ENCODE measurements at regions of chr12 and their contacts with region 1.

Region 1: DNA sequence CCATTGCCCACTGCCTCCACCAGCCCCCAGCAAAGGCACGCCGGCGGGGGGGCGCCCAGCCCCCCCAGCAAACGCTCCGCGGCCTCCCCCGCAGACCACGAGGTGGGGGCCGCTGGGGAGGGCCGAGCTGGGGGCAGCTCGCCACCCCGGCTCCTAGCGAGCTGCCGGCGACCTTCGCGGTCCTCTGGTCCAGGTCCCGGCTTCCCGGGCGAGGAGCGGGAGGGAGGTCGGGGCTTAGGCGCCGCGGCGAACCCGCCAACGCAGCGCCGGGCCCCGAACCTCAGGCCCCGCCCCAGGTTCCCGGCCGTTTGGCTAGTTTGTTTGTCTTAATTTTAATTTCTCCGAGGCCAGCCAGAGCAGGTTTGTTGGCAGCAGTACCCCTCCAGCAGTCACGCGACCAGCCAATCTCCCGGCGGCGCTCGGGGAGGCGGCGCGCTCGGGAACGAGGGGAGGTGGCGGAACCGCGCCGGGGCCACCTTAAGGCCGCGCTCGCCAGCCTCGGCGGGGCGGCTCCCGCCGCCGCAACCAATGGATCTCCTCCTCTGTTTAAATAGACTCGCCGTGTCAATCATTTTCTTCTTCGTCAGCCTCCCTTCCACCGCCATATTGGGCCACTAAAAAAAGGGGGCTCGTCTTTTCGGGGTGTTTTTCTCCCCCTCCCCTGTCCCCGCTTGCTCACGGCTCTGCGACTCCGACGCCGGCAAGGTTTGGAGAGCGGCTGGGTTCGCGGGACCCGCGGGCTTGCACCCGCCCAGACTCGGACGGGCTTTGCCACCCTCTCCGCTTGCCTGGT is at the start of gene CDKN1B:
- DNase-seq: peak; percentile 68 to 91 (median 87)
- ATAC-seq: peak; percentile 77
- H3K4me3 ChIP-seq: peak within 1 kb of the TSS; percentile 94
- H3K4me3 Mint-ChIP-seq: peak within 1 kb of the TSS; percentile 87 to 100 (median 98)
- H3K27ac ChIP-seq: peak within 1 kb of the TSS; percentile 99
- H3K27ac Mint-ChIP-seq: peak within 1 kb of the TSS; percentile 97 to 99 (median 99)
- H3K4me1 ChIP-seq: peaks cover 24 to 39% of the 10 kb centered on the region in 2 donors
- H3K4me1 Mint-ChIP-seq: peaks cover 43 to 66% (median 55%) of the 10 kb centered on the region in 7 donors
- H3K27me3 ChIP-seq: no peaks in the 10 kb centered on the region
- H3K27me3 Mint-ChIP-seq: no peaks in the 10 kb centered on the region
- total RNA-seq, gene CDKN1B: 105 to 205 (median 191) TPM

Region 2: DNA sequence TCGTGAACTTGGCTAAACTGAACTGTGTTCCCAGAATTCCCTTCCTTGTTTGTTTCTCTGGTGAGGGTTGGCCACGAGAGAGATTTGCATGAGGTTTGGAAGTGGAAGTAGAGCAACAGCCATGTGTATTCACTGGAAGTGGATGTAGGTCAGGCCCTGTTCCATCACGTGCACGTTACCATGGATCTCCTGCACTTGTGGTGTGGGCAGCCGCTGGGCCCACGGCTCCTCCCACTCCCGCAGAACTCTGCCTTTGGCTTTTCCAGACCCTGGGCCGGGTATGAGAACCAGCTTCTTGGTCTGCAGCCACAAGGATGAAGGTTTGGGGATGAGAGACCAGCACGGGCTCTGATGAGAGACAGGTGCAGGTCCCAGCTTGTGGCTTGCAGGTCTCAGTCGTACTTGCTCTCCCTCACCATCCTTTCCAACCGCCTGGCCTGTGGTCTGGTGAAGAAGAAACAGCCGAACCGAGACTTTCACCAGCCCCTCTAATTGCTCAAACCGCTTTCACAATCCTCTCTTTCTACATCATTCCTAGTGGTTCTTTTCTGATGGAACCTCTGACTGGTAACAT is 249.2 kb before region 1 on chr12:
- CTCF ChIA-PET with region 1: no interaction called
- POLR2A ChIA-PET with region 1: interaction called, 12 read pairs
- intact Hi-C with region 1: no loop called
- DNase-seq: peak in 3 of 9 donors; percentile 15 to 37 (median 35)
- ATAC-seq: peak; percentile 38
- H3K4me3 ChIP-seq: no peak overlapping the region
- H3K4me3 Mint-ChIP-seq: peak overlapping the region in 9 of 10 donors; percentile 16 to 70 (median 50)
- H3K27ac ChIP-seq: peak overlapping the region; percentile 75
- H3K27ac Mint-ChIP-seq: peak overlapping the region; percentile 89 to 99 (median 96)
- H3K4me1 ChIP-seq: peaks cover 29 to 39% of the 10 kb centered on the region in 2 donors
- H3K4me1 Mint-ChIP-seq: peaks cover 19 to 63% (median 52%) of the 10 kb centered on the region in 7 donors
- H3K27me3 ChIP-seq: no peaks in the 10 kb centered on the region
- H3K27me3 Mint-ChIP-seq: no peaks in the 10 kb centered on the region

Region 3: DNA sequence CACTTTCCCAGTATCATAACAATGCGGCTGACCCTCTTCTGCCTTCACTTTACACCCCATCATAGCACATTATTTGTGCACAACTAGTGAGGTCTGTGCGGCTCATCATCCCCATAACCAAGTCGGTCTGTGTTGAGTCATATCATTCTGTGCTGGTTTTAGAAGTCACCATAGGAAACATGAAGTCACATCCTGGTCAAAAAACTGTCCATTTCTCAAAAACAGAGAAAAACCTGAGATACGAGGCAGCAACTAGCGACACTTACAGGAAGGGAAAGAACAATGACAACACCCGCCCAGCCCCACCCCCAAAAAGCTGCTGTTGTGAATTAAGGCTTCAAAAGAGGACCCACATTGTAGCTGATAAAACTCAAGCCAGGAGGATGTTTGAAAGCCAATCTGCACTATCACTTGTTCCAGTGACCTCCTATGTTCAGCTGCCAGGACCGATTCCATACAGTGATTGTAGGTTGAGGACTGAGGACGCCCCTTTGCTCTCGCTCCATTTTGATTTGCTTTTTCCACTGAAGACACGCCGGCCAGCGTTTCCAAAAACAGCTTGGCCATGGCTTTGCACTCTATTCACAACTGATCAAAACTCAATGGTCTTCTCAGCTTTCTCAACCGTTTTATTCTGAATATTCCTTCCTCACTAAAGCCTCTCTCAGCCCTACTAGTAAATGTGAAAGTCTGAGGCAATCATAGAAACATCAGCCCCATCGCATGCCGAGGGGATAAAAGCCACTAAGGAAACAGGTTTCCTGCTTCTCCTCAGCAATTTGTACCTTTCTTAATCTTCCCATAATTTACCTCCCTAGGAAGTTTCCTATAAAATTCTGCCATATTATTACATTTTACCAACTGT is 241.8 kb before region 1 on chr12:
- CTCF ChIA-PET with region 1: no interaction called
- POLR2A ChIA-PET with region 1: interaction called, 4 read pairs
- intact Hi-C with region 1: loop called (anchors 1 to 5 kb)
- DNase-seq: peak in 3 of 9 donors; percentile 22 to 49 (median 37)
- ATAC-seq: peak; percentile 84
- H3K4me3 ChIP-seq: peak overlapping the region; percentile 7
- H3K4me3 Mint-ChIP-seq: peak overlapping the region in 9 of 10 donors; percentile 11 to 76 (median 43)
- H3K27ac ChIP-seq: peak overlapping the region; percentile 39
- H3K27ac Mint-ChIP-seq: peak overlapping the region; percentile 72 to 95 (median 91)
- H3K4me1 ChIP-seq: peaks cover 7 to 17% of the 10 kb centered on the region in 2 donors
- H3K4me1 Mint-ChIP-seq: peaks cover 10 to 72% (median 42%) of the 10 kb centered on the region in 7 donors
- H3K27me3 ChIP-seq: no peaks in the 10 kb centered on the region
- H3K27me3 Mint-ChIP-seq: no peaks in the 10 kb centered on the region

Region 4: GRCh38 chr12:12645485-12645884 is 71.5 kb before region 1 on chr12:
- CTCF ChIA-PET with region 1: interaction called, 5 read pairs
- POLR2A ChIA-PET with region 1: interaction called, 17 read pairs
- intact Hi-C with region 1: loop called in 1 of 2 experiments (anchors 1 kb)
- DNase-seq: peak in 8 of 9 donors; percentile 24 to 76 (median 62)
- ATAC-seq: peak; percentile 80
- H3K4me3 ChIP-seq: no peak overlapping the region
- H3K4me3 Mint-ChIP-seq: no peak overlapping the region
- H3K27ac ChIP-seq: no peak overlapping the region
- H3K27ac Mint-ChIP-seq: peak overlapping the region in 3 of 9 donors; percentile 42 to 79 (median 67)
- H3K4me1 ChIP-seq: no peaks in the 10 kb centered on the region
- H3K4me1 Mint-ChIP-seq: peaks cover 0 to 11% (median 3%) of the 10 kb centered on the region in 7 donors
- H3K27me3 ChIP-seq: no peaks in the 10 kb centered on the region
- H3K27me3 Mint-ChIP-seq: no peaks in the 10 kb centered on the region

Region 5: DNA sequence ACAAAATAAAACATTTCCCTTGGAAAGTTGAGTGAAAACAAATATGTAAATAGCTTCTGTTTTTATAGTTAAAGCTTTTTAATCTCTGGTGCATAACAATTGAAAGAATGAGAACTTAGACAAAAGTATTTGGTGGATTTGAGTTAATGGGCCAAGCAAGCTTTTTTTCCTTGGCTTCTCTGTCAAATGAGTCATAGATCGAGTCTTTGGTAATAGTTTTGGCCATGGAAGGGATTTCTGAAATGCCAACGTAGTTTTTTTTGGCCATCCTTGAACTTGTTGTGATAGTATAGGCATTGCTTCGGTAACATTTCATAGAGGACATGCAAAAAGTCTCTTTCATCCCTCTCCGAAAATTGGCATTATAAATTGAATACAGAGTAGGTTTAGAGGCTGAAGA is 55.9 kb before region 1 on chr12:
- CTCF ChIA-PET with region 1: interaction called, 3 read pairs
- POLR2A ChIA-PET with region 1: interaction called, 6 read pairs
- intact Hi-C with region 1: loop called in 1 of 2 experiments (anchors 1 kb)
- DNase-seq: no peak
- ATAC-seq: no peak
- H3K4me3 ChIP-seq: no peak overlapping the region
- H3K4me3 Mint-ChIP-seq: no peak overlapping the region
- H3K27ac ChIP-seq: no peak overlapping the region
- H3K27ac Mint-ChIP-seq: peak overlapping the region in 1 of 9 donors; percentile 82
- H3K4me1 ChIP-seq: no peaks in the 10 kb centered on the region
- H3K4me1 Mint-ChIP-seq: peaks cover 0 to 3% (median under 1%) of the 10 kb centered on the region in 7 donors
- H3K27me3 ChIP-seq: no peaks in the 10 kb centered on the region
- H3K27me3 Mint-ChIP-seq: no peaks in the 10 kb centered on the region

Region 6: DNA sequence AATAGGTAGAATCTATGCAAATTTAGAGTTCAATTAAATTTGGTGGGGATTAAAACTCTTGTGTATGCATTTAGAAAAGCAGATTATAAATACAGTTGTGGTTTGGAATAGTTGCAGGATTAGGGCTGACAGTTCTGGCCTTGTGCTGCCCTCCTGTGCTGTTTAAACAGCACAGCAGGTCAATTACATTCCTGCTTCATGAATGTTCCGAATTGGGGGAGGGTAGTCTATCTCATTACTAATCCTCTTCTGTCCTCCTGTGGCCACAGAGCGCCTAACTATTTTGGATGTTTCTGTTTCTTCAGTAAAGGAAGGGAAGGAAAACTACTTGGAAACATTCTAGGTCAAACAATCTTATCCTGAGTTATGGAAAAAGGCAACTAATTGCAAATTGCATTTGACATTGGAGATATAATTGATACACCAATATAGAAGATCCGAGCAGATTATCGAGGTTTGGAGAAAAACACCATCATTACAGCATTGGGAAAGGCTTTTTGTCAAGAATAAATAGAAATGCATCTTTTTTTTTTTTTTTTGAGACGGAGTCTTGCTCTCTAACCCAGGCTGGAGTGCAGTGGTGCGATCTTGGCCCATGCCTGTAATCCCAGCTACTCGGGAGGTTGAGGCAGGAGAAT is 12.3 kb before region 1 on chr12:
- CTCF ChIA-PET with region 1: interaction called, 8 read pairs
- POLR2A ChIA-PET with region 1: interaction called, 1,179 read pairs
- intact Hi-C with region 1: loop called (anchors 1 kb)
- DNase-seq: peak in 7 of 9 donors; percentile 44 to 71 (median 60)
- ATAC-seq: peak; percentile 92
- H3K4me3 ChIP-seq: no peak overlapping the region
- H3K4me3 Mint-ChIP-seq: peak overlapping the region in 9 of 10 donors; percentile 16 to 76 (median 58)
- H3K27ac ChIP-seq: no peak overlapping the region
- H3K27ac Mint-ChIP-seq: peak overlapping the region; percentile 15 to 80 (median 64)
- H3K4me1 ChIP-seq: peaks cover 18 to 37% of the 10 kb centered on the region in 2 donors
- H3K4me1 Mint-ChIP-seq: peaks cover 17 to 35% (median 24%) of the 10 kb centered on the region in 7 donors
- H3K27me3 ChIP-seq: no peaks in the 10 kb centered on the region
- H3K27me3 Mint-ChIP-seq: no peaks in the 10 kb centered on the region

Region 7: GRCh38 chr12:12736759-12737676 is 20.0 kb after region 1 on chr12:
- CTCF ChIA-PET with region 1: interaction called, 41 read pairs
- POLR2A ChIA-PET with region 1: interaction called, 311 read pairs
- intact Hi-C with region 1: loop called (anchors 1 kb)
- DNase-seq: peak in 7 of 9 donors; percentile 32 to 59 (median 39)
- ATAC-seq: peak; percentile 93
- H3K4me3 ChIP-seq: peak overlapping the region; percentile 28
- H3K4me3 Mint-ChIP-seq: peak overlapping the region; percentile 53 to 82 (median 68)
- H3K27ac ChIP-seq: peak overlapping the region; percentile 54
- H3K27ac Mint-ChIP-seq: peak overlapping the region; percentile 75 to 93 (median 85)
- H3K4me1 ChIP-seq: peaks cover 9 to 33% of the 10 kb centered on the region in 2 donors
- H3K4me1 Mint-ChIP-seq: peaks cover 21 to 65% (median 35%) of the 10 kb centered on the region in 7 donors
- H3K27me3 ChIP-seq: no peaks in the 10 kb centered on the region
- H3K27me3 Mint-ChIP-seq: no peaks in the 10 kb centered on the region

Measured in naive thymus-derived CD4-positive, alpha-beta T cell (primary cell).